PC-9 (cell line): ENCODE measurements at regions of chr11 and their contacts with region 1.

Region 1: DNA sequence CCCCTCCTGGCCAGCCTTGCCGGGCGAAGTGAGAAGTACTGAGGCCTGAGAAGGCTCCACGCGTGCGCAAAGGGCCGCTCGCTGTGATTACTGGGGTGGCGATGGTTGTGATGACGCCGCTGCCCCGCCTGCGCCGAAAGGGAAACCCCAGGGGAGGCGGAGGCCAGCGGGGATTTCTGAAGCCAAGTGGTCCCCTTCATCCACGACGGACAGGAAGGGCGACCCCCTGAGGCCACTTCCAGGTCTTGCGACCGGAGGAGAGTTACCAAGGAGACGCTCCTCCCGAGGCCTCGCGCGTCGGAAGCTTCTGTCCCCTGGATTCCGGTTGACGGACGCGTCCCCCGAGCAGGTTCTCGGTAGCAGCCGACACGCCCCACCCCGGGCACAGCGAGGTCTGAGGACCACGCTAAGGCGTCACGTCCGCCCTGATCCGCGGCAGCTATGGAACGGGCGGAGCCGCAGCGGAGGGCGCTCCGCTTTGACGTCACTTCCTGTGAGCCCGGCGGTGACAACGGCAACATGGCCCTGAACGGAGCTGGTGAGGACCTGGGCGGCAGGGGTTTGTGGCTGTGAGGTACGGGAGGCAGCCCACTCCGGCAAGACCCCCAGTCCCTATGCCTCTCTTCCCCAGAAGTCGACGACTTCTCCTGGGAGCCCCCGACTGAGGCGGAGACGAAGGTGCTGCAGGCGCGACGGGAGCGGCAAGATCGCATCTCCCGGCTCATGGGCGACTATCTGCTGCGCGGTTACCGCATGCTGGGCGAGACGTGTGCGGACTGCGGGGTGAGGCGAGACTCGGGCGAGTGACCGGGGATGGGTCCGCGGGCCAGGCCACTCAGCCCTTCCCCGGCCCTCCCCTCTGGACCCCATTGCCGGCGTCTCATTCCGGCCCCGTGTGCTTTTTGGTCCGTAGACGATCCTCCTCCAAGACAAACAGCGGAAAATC is at the start of gene ZNRD2:
- DNase-seq: peak; percentile 98 to 99
- H3K4me3 ChIP-seq: peak within 1 kb of the TSS; percentile 73
- H3K27ac ChIP-seq: peak within 1 kb of the TSS; percentile 68
- H3K4me1 ChIP-seq: peaks cover 54% of the 10 kb centered on the region
- H3K27me3 ChIP-seq: no peaks in the 10 kb centered on the region
- CTCF ChIP-seq: peak; percentile 57
- total RNA-seq, gene ZNRD2: 51.4 and 53.5 TPM in 2 replicates

Region 2: GRCh38 chr11:65382033-65382807 is 188.0 kb before region 1 on chr11 and contains the start of gene SLC25A45:
- CTCF ChIA-PET with region 1: interaction called, 3 read pairs
- POLR2A ChIA-PET with region 1: no interaction called
- intact Hi-C with region 1: loop called (anchors 2 kb)
- DNase-seq: peak; percentile 97 to 98
- H3K4me3 ChIP-seq: peak within 1 kb of the TSS; percentile 48; the same call in 1 of the 2 replicates
- H3K27ac ChIP-seq: peak within 1 kb of the TSS; percentile 93
- H3K4me1 ChIP-seq: peaks cover 64% of the 10 kb centered on the region
- H3K27me3 ChIP-seq: no peaks in the 10 kb centered on the region
- CTCF ChIP-seq: peak; percentile 79
- total RNA-seq, gene SLC25A45: 9.5 and 9.8 TPM in 2 replicates

Region 3: GRCh38 chr11:65524741-65525545 is 45.3 kb before region 1 on chr11 and contains the start of gene SCYL1:
- CTCF ChIA-PET with region 1: interaction called, 9 read pairs
- POLR2A ChIA-PET with region 1: no interaction called
- intact Hi-C with region 1: loop called (anchors 5 kb)
- DNase-seq: peak in 1 of 2 experiments; percentile 82
- H3K4me3 ChIP-seq: peak within 1 kb of the TSS; percentile 100
- H3K27ac ChIP-seq: peak within 1 kb of the TSS; percentile 39; the same call in 1 of the 2 replicates
- H3K4me1 ChIP-seq: peaks cover 13% of the 10 kb centered on the region
- H3K27me3 ChIP-seq: no peaks in the 10 kb centered on the region
- CTCF ChIP-seq: no peak
- total RNA-seq, gene SCYL1: 106 and 135 TPM in 2 replicates

Region 4: DNA sequence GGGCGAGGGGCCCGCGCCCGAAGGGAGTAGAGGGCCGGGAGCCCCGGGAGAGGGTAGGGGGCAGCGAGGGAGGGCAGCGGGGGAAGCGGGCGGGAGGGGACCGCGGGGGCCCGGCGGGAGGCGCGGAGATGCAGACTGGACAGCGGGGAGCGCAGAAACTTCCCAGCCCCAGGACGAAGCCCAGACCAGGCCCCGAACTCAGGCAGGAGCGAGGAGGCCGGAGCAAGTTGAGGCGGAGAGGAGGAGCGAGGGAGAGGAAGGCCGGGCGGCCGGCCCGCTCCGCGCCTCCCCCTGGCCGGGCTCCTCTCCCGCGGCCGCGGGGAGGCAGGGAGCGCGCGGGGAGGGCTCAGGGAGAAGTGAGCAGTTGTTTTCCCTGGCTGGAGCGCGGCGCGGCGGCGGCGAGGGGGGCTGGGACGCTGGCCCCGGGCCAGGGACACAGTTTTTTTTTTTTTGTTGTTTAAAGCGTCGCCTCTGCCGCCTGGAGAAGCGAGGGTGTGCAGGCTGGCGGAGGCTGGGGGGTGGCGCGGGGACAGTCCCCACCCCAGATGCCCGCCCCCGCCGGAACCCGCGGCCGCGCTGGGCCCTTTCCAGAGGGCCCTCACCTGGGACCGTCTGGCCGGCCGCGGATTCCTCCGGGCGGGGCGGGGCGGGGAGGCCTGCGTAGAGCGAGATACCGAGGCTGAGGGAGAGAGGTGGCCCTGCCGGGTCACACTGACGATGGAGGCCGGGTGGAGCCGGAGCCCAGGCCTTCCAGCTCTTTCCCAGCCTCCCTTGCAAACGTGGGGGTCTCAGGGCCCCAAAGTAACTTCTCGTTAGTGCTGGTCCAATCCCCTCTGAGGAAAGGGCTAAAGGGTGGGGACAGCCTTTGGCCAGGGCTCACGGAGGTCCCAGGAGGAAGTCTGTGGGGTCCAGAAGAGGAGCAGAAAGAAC is 12.0 kb before region 1 on chr11 and contains the start of gene LTBP3:
- CTCF ChIA-PET with region 1: interaction called, 12 read pairs
- POLR2A ChIA-PET with region 1: interaction called, 13 read pairs
- intact Hi-C with region 1: loop called (anchors 1 kb)
- DNase-seq: peak; percentile 71 to 92
- H3K4me3 ChIP-seq: peak within 1 kb of the TSS; percentile 77
- H3K27ac ChIP-seq: peak within 1 kb of the TSS; percentile 69
- H3K4me1 ChIP-seq: peaks cover 71% of the 10 kb centered on the region
- H3K27me3 ChIP-seq: no peaks in the 10 kb centered on the region
- CTCF ChIP-seq: no peak
- total RNA-seq, gene LTBP3: 455 and 553 TPM in 2 replicates

Region 5: GRCh38 chr11:65646921-65647751 is 76.9 kb after region 1 on chr11:
- CTCF ChIA-PET with region 1: no interaction called
- POLR2A ChIA-PET with region 1: no interaction called
- intact Hi-C with region 1: no loop called
- DNase-seq: no peak
- H3K4me3 ChIP-seq: no peak overlapping the region
- H3K27ac ChIP-seq: no peak overlapping the region
- H3K4me1 ChIP-seq: peaks cover 20% of the 10 kb centered on the region
- H3K27me3 ChIP-seq: no peaks in the 10 kb centered on the region
- CTCF ChIP-seq: no peak

Region 6: DNA sequence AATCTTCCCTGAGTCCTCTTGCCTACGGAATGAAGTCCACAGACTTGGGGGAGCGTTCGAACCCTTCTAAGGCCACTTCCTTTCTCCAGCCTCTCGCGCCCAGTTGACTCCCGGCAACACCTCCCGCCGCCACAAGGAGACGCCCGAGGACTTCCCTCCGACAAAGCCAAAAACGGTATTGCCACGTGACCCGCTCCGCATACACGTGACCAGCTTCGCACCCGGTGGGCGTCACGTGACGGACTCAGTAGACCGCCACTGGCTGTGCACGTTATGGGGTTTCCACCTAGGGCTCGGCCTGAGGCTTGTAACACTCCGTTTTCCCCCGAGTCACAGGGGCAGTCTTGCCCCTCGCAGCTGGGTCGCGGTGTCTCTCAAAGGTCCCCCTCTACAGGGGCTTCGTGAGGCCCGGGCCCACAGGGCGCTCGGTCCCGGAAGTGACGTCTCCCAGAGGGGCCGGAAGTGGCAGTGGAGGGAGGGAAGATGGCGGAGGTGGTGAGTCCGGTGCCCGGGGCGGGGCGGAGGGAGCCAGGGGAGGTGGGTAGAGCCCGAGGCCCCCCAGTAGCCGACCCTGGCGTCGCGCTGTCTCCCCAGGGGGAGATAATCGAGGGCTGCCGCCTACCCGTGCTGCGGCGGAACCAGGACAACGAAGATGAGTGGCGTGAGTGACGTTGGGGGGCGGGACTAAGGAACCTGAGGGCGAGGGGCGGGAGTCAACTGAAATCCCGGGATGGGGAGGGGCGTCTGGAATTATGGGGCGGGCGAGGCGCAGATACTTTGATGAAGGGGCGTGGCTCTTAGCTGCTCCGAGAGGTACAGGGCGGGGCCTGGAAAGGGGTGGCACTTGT is 141.8 kb after region 1 on chr11 and contains the start of gene KAT5:
- CTCF ChIA-PET with region 1: no interaction called
- POLR2A ChIA-PET with region 1: no interaction called
- intact Hi-C with region 1: loop called (anchors 5 kb)
- DNase-seq: peak; percentile 96 to 99
- H3K4me3 ChIP-seq: peak within 1 kb of the TSS; percentile 86
- H3K27ac ChIP-seq: peak within 1 kb of the TSS; percentile 91
- H3K4me1 ChIP-seq: peaks cover 13% of the 10 kb centered on the region
- H3K27me3 ChIP-seq: no peaks in the 10 kb centered on the region
- CTCF ChIP-seq: peak; percentile 97
- total RNA-seq, gene KAT5: 49.6 and 57.1 TPM in 2 replicates

Region 7: DNA sequence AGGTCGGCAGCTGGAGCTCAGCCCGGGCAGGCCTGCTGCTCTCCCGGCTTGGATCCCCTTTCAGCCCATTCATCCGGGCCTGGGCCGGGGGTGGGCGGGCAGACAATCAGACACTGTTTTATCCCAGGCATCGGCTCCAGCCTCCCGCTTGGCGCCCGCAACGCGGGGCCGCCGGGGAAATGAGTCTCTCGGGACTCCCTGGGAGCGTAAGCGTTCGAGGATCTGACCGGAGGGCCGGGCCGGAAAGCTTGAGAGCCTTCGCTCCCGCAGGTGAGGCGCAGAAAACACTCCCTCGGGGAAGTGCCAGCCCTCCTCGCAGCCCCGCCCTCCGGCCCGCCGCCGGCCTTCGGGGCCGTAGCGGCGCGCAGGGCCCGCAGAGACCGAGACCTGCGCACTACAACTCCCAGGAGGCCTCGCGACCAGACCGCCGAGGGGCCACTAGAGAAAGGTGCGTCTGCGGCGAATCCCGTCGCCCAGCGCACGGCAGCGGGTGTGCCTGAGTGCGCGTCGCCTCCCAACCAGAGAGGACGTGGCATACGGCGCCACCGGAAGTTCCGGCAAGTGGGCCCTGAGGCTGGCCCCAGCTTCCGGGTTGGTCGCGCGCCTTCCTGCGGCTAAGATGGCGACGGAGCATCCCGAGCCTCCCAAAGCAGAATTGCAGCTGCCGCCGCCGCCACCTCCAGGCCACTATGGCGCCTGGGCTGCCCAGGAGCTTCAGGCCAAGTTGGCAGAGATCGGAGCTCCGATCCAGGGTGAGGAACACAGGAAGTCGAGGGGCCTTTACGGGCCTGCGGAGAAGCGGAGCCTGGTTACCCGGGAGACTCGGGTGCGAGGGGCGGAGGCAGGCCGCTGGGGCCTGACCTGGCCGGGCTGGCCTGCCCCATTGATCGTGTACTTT is 481.8 kb after region 1 on chr11 and contains the start of gene SF3B2:
- CTCF ChIA-PET with region 1: no interaction called
- POLR2A ChIA-PET with region 1: no interaction called
- intact Hi-C with region 1: loop called (anchors 5 kb)
- DNase-seq: peak; percentile 98 to 99
- H3K4me3 ChIP-seq: peak within 1 kb of the TSS; percentile 99
- H3K27ac ChIP-seq: peak within 1 kb of the TSS; percentile 75
- H3K4me1 ChIP-seq: peaks cover 20% of the 10 kb centered on the region
- H3K27me3 ChIP-seq: no peaks in the 10 kb centered on the region
- CTCF ChIP-seq: no peak
- total RNA-seq, gene SF3B2: 221 and 224 TPM in 2 replicates